ENCODE measurements at regions of chr11 and their contacts with region 1.

Region 1: GRCh38 chr11:132028380-132029240 is 658.2 kb downstream of the NTM start:
- DNase-seq: no peak
- ATAC-seq: peak; percentile 91

Region 2: DNA sequence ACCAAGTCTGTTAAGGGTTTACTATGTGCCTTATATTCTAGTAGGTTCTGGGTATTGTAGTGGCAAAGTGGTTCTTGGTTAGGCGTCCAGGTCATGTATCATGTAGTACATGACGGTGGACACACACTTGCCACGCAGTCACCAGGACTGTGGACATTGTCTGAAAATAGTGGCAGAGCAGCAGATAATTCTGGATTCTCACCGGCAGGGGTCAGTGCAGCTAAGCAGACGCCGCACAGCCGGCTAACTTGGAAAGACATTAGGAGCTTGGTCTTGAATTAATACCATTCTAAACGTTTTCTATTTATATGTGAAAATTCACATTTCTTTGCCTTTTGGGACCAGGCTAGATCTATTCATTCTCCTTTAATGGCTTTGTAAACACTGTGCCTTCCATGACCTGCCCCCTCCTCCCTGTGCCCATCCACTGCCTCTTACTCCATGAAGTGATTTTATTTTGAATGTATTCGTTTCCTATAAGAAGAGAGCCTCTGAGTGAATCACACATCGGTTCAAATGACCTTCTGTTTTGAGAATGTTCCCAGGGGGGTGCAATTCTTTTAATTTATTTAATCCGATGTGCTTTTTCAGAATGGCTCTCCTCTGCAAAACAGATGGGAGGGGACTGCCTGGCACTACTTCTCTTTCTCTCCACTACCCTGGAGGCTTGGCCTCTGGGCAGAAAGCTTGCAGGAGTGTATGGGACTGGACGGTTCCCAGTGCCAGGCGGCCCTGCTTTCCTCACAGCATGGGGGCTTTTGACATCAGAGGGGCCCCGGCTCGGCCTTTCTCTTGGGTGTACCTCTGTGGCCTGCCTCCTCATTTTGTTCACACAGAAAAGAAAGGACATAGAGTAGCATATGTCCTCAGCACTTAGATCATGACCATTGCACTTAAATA is 280.2 kb before region 1 on chr11:
- intact Hi-C with region 1: loop called (anchors 10 kb)
- DNase-seq: peak; percentile 67
- ATAC-seq: peak; percentile 88

Region 3: DNA sequence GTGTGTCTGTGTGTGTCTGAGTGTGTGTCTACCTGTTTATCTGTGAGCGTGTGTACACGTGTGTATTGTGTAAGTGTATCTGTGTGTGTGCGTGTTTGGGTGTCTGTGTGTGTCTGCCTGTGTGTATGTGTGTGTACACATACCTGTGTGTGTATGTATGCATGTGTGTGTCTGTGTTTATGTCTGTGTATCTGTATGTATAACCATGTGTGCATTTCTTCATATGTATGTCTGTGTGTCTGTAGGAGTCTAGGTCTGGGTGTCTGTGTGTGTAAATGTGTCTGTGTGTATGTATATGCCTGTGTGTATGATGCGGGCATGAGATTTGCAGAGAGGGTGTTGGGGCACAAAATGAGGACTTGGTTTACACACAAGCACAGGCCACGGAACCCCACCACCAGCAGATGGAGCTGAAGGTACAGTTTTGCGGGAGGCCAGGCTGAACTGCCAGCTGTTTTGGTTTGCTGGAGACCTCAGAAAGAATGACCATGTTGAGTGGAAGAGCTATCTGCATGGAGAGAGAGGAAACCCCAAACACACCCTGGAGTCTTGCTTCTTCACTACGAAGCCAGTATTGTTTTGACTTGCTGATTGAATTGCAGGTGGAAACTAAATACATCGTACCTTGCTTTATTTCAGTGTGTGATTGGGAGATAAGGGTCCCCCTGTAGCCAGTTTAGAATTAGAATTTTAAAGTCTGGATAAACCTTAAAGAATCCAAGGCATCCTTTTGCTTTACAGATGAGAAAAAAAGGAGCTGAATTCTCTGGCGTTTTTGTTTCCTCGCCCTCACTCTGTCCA is 161.0 kb before region 1 on chr11:
- intact Hi-C with region 1: loop called (anchors 5 kb)
- DNase-seq: peak; percentile 86
- ATAC-seq: peak; percentile 88

Measured in Right ventricle myocardium superior (tissue), 1 donor.